ENCODE measurements at regions of chr3 and their contacts with region 1.

Region 1: DNA sequence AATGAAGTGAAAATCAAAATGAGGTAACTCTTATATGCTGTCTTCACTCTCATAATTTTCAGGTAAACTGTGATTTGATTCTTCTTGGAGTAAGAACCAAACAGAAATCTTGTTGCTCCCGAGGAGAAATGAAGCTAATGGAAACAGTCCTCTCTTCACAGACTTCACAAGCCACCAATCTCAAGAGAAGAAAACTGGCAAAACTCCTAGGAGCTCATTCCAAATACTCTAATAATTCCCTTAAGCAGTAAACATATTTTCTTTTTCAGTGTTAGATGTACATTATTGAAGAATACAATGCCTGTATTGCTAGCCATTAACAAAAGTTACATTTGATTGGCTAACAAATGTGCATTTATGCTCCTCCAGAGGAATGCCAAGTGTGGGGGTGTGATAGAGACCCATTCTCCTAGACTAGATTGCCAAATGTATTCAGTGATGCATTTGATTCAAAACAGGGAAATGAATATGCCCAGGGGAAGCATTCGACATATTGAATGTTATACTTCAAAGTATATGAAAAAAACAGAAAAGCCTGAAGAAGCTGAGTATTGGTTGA is 11.8 kb upstream of the RIOX2 start:
- DNase-seq: no peak

Region 2: DNA sequence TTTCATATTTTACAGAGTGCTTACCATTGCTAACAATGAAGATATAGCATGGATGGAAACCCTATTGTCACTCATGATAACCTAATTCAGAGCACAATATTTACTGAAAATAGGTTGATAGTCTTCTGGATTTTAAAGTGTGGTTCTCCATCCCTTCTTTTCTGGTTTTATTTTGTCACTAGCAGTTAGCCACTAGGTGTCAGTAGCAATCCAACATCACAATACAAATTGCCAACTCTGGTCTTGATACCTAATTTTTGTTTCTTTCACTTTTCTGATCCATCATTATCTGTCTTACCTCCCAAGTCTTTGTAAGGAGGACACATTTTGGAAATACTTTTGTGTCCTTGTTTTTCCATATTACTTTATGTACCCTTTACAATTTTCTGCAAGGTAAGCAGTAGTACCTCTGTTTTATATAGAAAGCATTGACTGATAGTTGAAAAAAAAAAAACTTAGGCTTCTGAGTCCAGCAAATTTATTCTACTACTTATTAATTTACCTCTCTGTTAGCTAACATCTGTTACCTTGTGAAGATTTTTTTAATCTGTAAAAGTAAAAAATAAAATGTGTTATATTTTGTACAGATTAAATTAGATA is 190.5 kb before region 1 on chr3:
- CTCF ChIA-PET with region 1: interaction called, 12 read pairs
- POLR2A ChIA-PET with region 1: no interaction called
- DNase-seq: peak; percentile 31

Region 3: GRCh38 chr3:97863031-97863430 is 121.0 kb before region 1 on chr3:
- CTCF ChIA-PET with region 1: no interaction called
- POLR2A ChIA-PET with region 1: no interaction called
- DNase-seq: no peak